Activated T-helper 1 cell treated with anti-CD3 and anti-CD28 coated beads, Interleukin-12 subunit alpha, Interleukin-12 subunit beta, Interleukin-2, Interleukin-4 antibody, amounts not matched to agents 30 ng/mL and 10 ng/mL and 1 ng/mL, durations not matched to agents 14 hours and 24 hours and 36 hours (primary cell): ENCODE measurements at regions of chr1 and their contacts with region 1.

Region 1: DNA sequence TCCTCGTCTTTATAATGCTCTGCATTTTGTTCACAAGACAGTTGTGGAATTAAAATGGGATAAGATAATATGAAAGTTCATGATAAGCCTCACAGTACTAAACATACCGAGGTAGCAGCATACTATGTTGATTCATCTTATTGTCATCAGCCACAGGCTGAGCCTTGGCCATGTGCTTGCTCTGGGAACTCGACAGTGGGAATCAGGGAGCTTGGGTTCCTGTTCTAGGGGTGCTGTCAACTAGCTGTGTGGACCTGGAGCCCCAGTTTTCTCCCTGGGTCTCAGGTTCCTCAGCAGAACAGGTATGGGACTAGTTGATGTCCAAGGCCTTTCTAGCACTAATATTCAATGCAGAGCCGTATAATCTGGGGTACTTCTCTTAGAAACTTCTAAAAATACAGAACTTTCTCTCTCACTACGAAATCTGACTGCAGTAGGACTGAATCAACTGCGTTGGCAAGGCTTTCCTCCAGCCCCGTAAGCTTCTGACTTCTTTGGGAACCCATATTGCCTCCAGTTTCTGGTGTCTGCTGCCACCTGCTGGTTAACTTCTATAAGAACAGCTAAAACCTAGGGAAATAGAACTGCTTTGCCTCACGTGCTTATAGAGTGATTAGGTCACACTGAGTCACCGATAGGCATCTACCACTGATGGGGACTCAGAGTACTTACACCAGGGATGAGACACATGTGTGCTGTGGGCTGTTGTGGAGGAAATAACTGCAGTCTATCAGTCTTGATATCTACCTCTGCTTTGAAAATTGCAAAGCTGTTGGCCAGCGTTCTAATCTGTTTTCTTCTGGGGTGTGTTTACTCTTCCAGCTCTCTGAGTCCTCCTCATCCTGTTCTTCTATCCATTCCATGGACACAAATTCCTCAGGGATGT is 110.9 kb downstream of the RGL1 start:
- DNase-seq: peak; percentile 69
- H3K4me3 Mint-ChIP-seq: no peak overlapping the region
- H3K27ac Mint-ChIP-seq: peak overlapping the region; percentile 33
- H3K4me1 Mint-ChIP-seq: peaks cover 21% of the 10 kb centered on the region
- H3K27me3 Mint-ChIP-seq: no peaks in the 10 kb centered on the region

Region 2: GRCh38 chr1:183281553-183282091 is 634.2 kb before region 1 on chr1:
- intact Hi-C with region 1: loop called (anchors 1 kb)
- DNase-seq: peak; percentile 50
- H3K4me3 Mint-ChIP-seq: no peak overlapping the region
- H3K27ac Mint-ChIP-seq: no peak overlapping the region
- H3K4me1 Mint-ChIP-seq: peaks cover 6% of the 10 kb centered on the region
- H3K27me3 Mint-ChIP-seq: peaks cover 5% of the 10 kb centered on the region

Region 3: DNA sequence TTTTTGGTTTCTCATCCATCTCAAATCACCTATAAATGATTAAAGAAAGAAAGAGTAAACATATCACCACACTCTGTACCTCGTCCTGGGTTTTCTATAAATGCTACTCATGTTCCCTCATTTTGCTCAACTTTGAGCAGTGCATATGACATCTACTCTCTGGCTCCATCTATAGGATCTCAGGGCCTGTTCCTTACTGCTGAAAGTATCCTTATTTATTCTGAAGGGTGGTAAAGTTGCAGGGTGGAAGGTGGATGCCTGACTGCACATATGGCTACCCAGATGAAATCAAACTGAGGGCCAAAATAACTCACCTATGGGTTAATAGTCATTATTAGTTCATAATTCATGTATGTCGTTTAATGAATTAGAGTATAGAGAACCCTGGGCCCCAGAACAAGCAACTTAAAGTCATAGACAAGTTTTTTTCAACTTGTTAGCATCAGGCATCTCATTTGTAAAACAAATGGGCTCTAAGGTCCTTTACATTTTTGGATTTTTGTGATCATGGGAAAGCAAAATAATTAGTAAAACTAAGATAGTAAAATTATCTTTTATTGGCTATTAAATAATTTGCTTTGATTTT is 372.2 kb before region 1 on chr1:
- intact Hi-C with region 1: loop called (anchors 10 kb)
- DNase-seq: no peak
- H3K4me3 Mint-ChIP-seq: no peak overlapping the region
- H3K27ac Mint-ChIP-seq: no peak overlapping the region
- H3K4me1 Mint-ChIP-seq: peaks cover 22% of the 10 kb centered on the region
- H3K27me3 Mint-ChIP-seq: no peaks in the 10 kb centered on the region

Region 4: GRCh38 chr1:183655562-183656075 is 260.2 kb before region 1 on chr1:
- intact Hi-C with region 1: loop called (anchors 1 kb)
- DNase-seq: peak; percentile 52
- H3K4me3 Mint-ChIP-seq: no peak overlapping the region
- H3K27ac Mint-ChIP-seq: peak overlapping the region; percentile 0
- H3K4me1 Mint-ChIP-seq: peaks cover 48% of the 10 kb centered on the region
- H3K27me3 Mint-ChIP-seq: no peaks in the 10 kb centered on the region

Region 5: GRCh38 chr1:183685112-183685713 is 230.7 kb before region 1 on chr1:
- intact Hi-C with region 1: loop called (anchors 5 kb)
- DNase-seq: peak; percentile 11
- H3K4me3 Mint-ChIP-seq: no peak overlapping the region
- H3K27ac Mint-ChIP-seq: no peak overlapping the region
- H3K4me1 Mint-ChIP-seq: peaks cover 9% of the 10 kb centered on the region
- H3K27me3 Mint-ChIP-seq: peaks cover 19% of the 10 kb centered on the region

Region 6: DNA sequence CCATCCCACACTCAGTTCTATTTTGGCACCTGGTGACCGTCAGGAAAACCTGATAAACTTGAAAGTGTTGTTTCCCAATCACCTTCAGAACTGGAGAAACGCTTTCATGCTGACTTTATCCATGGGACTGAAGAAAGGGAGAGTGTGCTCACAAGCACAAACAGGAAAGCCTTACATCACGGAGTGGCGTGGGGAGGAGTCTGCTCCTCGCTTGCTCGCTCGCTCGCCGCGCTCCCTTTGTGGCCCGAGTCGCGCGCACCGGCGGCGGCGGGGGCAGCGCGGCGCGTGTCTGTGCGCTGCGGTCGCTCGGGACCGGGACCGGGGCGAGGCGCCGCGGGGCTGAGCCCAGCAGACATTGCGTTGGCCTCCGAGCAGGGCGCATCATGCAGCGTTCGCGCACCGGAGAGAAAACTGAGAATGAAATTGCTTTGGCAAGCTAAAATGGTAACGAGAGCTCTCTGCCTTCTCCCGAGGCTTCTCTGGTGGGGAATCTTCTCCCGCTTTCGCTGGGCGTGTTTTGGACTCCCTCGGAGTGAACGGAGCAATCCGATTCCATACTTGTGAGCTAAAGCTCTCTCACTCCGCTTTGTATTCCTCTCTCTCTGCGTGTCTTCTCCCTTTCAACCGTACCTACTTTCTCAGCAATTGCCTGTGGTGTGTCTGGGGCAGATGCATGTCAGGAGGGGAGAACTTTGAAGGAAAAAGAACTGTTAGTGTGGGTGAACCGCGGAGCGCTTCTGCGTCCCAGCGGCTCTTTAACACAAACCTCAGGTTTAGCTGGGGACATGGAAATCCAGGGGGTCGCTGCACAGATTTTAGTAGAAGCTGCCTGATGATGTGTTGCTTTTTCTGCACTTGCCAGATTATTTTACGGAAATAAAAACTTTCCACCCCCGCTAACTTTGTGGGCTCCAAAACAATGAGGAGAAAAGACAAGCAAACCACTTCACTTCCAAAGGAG is 110.7 kb before region 1 on chr1 and contains the start of gene RGL1:
- intact Hi-C with region 1: loop called (anchors 5 kb)
- DNase-seq: peak; percentile 22
- H3K4me3 Mint-ChIP-seq: peak within 1 kb of the TSS; percentile 83
- H3K27ac Mint-ChIP-seq: peak within 1 kb of the TSS; percentile 6
- H3K4me1 Mint-ChIP-seq: peaks cover 34% of the 10 kb centered on the region
- H3K27me3 Mint-ChIP-seq: peaks cover 3% of the 10 kb centered on the region
- total RNA-seq, gene RGL1: 2.7 and 2.8 TPM in 2 replicates

Region 7: DNA sequence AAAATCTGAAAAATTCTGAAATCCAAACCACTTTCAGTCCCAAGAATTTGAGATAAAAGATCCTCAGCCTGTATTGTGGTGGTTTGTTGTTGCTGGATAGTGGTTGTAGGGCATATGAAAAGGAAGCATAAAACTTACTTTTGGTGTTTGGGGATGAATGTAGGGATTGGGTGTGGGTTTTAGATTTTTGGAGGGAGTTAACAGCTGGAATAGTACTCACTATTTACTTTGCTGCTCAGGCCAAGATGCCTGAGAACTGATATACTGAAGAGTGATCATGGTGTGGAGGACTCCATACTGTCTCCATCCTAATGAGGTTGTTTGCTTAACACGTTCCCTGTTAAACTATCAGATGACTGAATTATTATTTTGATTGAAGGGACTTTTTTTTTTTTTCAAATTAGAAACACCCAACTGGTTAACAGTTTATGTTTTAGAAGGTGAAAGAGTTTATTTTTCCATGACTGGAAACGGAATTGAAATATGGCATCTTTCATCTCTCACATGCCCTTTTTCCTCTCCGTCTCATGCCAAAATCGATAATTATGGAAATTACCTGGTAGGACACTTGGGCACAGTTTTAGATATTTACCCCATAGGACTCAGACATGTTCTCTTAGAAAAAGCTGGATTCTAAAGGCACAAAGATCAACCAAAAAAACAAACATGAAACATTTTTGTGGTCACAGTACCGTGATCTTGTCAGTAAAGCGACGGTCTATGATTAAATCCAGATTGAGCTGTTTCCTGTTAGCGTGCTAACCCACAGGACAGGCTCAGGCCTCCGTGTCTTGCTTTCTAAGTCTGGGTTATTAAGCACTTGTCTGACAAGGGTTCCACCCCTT is 73.7 kb before region 1 on chr1:
- intact Hi-C with region 1: loop called (anchors 2 kb)
- DNase-seq: peak; percentile 20
- H3K4me3 Mint-ChIP-seq: peak overlapping the region; percentile 71
- H3K27ac Mint-ChIP-seq: peak overlapping the region; percentile 89
- H3K4me1 Mint-ChIP-seq: peaks cover 33% of the 10 kb centered on the region
- H3K27me3 Mint-ChIP-seq: no peaks in the 10 kb centered on the region